MCF 10A (cell line): ENCODE measurements at regions of chr11 and their contacts with region 1.

Region 1: DNA sequence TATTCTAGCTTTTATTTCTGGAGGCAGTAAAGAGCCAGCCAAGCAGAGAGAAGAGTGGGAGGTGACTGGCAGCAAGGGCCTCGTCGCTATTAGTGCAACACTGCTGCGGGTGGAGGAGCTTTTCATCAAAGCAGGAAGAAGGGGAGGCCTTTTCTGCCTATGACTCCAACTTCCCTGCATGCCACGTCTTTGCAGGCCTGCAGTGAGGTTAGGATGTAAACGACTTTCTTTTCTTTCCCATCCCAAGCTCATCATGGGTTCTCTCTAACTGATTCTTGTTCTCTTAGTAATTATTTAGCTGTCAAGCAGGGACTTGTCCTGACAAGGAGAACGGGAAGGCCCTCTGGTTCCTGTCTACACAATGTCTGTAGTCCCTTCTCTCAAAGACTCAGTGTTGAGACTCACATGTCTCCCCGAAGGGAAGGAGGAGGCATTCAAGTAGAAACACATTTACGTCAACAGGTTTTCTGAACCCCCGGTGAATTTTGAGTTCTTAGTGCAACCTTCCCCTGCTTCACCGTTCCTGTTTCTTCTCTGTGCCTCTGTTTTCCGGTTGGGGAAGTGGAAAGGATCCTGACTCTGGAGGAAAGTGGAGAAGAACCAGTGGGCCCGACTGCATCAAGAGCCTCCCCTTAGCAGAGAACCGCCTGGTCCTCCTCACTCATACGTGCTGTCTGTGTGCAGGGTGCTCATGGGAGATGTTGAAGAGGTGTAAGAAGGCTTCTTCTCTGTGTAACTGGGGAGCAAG is 56.9 kb downstream of the PACS1 start:
- DNase-seq: peak; percentile 62
- H3K4me3 Mint-ChIP-seq: peak overlapping the region; percentile 33
- H3K27ac Mint-ChIP-seq: peak overlapping the region; percentile 96
- H3K4me1 Mint-ChIP-seq: peaks cover 32% of the 10 kb centered on the region
- H3K27me3 Mint-ChIP-seq: no peaks in the 10 kb centered on the region
- CTCF ChIP-seq: no peak

Region 2: DNA sequence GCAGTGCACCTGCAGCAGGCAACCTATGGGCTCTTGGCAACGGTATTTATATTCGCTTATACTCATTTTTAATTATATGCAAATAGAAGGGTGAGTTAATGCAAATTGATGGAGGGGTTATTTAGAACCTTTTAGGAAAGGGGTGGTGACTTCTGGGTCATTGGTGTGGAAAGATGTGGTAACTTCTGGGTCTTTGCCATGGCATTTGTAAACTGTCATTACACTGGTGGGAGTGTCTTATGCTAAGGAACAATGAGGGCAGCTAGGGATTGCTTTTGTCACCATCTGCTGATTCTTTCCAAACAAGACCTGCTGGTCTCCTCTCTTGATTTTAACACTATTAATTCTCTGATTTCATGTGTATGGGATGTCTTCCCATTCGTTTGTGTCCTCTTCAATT is 426.6 kb before region 1 on chr11:
- CTCF ChIA-PET with region 1: no interaction called
- POLR2A ChIA-PET with region 1: no interaction called
- intact Hi-C with region 1: no loop called
- DNase-seq: no peak
- H3K4me3 Mint-ChIP-seq: no peak overlapping the region
- H3K27ac Mint-ChIP-seq: no peak overlapping the region
- H3K4me1 Mint-ChIP-seq: no peaks in the 10 kb centered on the region
- H3K27me3 Mint-ChIP-seq: peaks cover 56% of the 10 kb centered on the region
- CTCF ChIP-seq: no peak

Region 3: GRCh38 chr11:66081505-66081904 is 45.5 kb before region 1 on chr11:
- CTCF ChIA-PET with region 1: interaction called, 3 read pairs
- POLR2A ChIA-PET with region 1: interaction called, 11 read pairs
- intact Hi-C with region 1: no loop called
- DNase-seq: peak; percentile 62
- H3K4me3 Mint-ChIP-seq: peak overlapping the region; percentile 35
- H3K27ac Mint-ChIP-seq: peak overlapping the region; percentile 87
- H3K4me1 Mint-ChIP-seq: peaks cover 44% of the 10 kb centered on the region
- H3K27me3 Mint-ChIP-seq: no peaks in the 10 kb centered on the region
- CTCF ChIP-seq: no peak